Heart right ventricle (tissue), 16 donors: ENCODE measurements at regions of chr13 and their contacts with region 1.

Region 1: DNA sequence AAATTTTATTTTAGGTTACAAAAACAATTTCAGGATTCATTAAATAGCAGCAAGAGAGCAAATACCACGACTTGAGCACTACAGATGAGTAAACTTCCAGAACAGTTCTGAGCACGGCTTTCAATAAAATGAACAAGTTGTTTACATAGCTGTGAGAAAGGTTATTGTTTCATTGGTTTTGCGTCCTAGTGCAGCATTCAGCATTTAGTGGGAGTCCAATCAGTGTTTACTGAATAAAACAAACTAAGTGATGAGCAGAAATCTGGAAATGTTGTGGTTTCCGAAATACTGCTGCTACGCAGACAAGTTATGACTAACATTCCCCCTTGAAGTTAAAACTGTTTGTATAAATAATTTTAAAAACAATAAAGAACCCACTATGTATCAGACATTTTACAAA is 251.5 kb upstream of the STARD13 start:
- DNase-seq: no peak
- ATAC-seq: no peak
- H3K4me3 ChIP-seq: no peak overlapping the region
- H3K27ac ChIP-seq: peak overlapping the region in 5 of 10 donors; percentile 0 to 39 (median 27)
- H3K4me1 ChIP-seq: peaks cover 2 to 44% (median 18%) of the 10 kb centered on the region in 9 donors
- H3K27me3 ChIP-seq: no peaks in the 10 kb centered on the region
- CTCF ChIP-seq: no peak

Region 2: GRCh38 chr13:32737111-32737571 is 799.9 kb before region 1 on chr13:
- intact Hi-C with region 1: loop called in 1 of 10 experiments (anchors 10 kb)
- DNase-seq: no peak
- ATAC-seq: peak in 4 of 8 donors; percentile 39 to 72 (median 64)
- H3K4me3 ChIP-seq: peak overlapping the region in 9 of 10 donors; percentile 7 to 46 (median 37)
- H3K27ac ChIP-seq: peak overlapping the region in 9 of 10 donors; percentile 20 to 84 (median 72)
- H3K4me1 ChIP-seq: peaks cover 0 to 26% (median 17%) of the 10 kb centered on the region in 9 donors
- H3K27me3 ChIP-seq: no peaks in the 10 kb centered on the region
- CTCF ChIP-seq: no peak

Region 3: GRCh38 chr13:33494596-33495204 is 42.3 kb before region 1 on chr13:
- intact Hi-C with region 1: no loop called
- DNase-seq: no peak
- ATAC-seq: peak; percentile 80 to 95 (median 90)
- H3K4me3 ChIP-seq: no peak overlapping the region
- H3K27ac ChIP-seq: peak overlapping the region in 9 of 10 donors; percentile 45 to 80 (median 68)
- H3K4me1 ChIP-seq: peaks cover 0 to 31% (median 22%) of the 10 kb centered on the region in 9 donors
- H3K27me3 ChIP-seq: no peaks in the 10 kb centered on the region
- CTCF ChIP-seq: no peak